Activated CD8-positive, alpha-beta T cell treated with anti-CD3 and anti-CD28 coated beads, Interleukin-2, amount 10 ng/mL, durations not matched to agents 7 days and 5 days (primary cell): ENCODE measurements at regions of chr3 and their contacts with region 1.

Region 1: DNA sequence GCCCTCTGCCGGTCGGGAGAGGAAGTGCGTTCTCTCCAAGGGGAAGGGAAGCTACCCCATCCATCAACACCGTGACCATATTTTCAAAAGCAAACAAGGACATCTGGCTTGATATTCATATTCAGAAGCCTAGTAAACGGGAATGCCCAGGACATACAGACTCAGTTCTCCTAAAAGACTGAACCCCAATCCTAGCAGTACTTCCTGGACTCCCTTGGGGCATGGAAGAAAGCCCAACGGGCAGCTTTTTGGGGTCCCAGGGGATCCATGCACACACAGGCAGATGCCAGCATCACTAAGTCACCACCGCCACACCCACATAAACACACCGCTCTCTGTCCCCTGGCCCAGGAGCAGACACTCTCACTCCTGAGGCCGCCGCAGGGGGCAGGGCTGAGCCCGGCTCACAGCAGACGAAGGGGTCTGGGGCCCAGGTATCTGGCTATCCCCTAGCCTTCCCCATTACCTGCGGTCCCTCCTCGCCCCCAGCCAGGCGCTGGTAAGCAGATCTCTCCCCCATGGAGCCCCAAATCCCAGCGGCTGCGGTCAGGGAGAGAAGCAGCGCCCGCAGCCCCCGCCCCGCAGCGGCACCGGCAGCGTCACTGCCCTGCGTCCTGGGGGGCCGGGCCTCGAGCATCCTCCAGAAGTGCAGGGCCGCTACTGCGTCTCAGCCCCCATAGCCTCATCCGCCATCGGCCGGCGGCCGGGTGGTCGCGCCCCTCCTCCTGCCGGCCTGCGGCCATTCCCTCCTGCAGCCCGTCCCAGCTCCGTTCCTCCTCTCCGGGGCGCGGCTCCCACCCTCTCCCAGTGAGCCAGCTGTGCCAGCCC is 13.4 kb downstream of the TNK2 start:
- DNase-seq: peak; percentile 78
- ATAC-seq: peak; percentile 75
- H3K4me3 Mint-ChIP-seq: peak overlapping the region; percentile 87
- H3K27ac Mint-ChIP-seq: peak overlapping the region; percentile 93
- H3K4me1 Mint-ChIP-seq: peaks cover 51% of the 10 kb centered on the region
- H3K27me3 Mint-ChIP-seq: no peaks in the 10 kb centered on the region

Region 2: GRCh38 chr3:195863121-195864006 is 31.6 kb before region 1 on chr3:
- CTCF ChIA-PET with region 1: interaction called, 54 read pairs
- POLR2A ChIA-PET with region 1: no interaction called
- DNase-seq: peak; percentile 70
- ATAC-seq: peak; percentile 72
- H3K4me3 Mint-ChIP-seq: no peak overlapping the region
- H3K27ac Mint-ChIP-seq: no peak overlapping the region
- H3K4me1 Mint-ChIP-seq: peaks cover 4% of the 10 kb centered on the region
- H3K27me3 Mint-ChIP-seq: no peaks in the 10 kb centered on the region

Region 3: GRCh38 chr3:195884691-195885035 is 10.3 kb before region 1 on chr3:
- CTCF ChIA-PET with region 1: interaction called, 12 read pairs
- POLR2A ChIA-PET with region 1: interaction called, 4 read pairs
- DNase-seq: no peak
- ATAC-seq: no peak
- H3K4me3 Mint-ChIP-seq: no peak overlapping the region
- H3K27ac Mint-ChIP-seq: no peak overlapping the region
- H3K4me1 Mint-ChIP-seq: peaks cover 8% of the 10 kb centered on the region
- H3K27me3 Mint-ChIP-seq: no peaks in the 10 kb centered on the region

Region 4: DNA sequence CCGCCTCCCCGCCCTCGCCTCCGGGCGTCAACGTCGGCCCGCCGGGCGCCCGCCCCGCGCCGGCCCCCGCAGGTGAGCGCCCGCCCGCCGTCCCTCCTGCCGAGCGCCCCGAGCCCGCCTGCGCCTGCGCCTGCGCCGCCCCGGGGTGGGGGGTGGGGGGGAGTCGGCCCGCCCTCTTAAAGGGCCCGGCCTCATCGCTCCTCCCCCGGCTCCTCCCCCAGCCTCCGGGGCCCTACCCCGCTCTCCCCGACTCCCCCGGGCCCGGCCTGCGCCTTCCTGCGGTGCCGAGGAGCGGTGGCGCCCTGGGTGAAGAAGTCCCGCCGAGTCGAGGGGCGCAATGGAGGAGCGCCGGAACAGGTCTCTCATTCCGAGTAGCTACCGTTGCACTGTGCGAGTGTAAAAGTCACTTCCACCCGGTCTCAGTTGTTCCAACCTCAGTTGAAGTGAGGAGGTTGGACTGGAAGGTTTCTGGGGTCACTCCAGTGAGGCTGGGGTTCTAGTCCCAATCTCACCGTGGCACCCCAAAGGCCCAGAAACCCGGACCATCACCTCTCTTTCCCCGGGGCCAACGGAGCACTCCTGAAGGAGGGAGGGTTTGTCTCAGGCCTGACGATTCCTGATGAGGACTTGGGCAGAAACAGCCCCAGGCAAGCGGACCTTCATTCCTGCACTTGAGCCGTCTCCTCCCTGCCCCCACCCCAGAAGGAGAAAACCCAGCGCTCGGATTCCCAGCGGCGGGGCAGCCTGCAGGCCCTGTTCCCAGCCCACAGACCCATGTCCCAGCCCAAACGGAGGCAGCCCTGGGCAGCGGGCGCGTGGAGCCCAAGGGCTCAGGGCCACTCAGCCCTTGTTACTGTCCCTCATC is 14.9 kb after region 1 on chr3:
- CTCF ChIA-PET with region 1: interaction called, 144 read pairs
- POLR2A ChIA-PET with region 1: interaction called, 160 read pairs
- DNase-seq: peak; percentile 90
- ATAC-seq: peak; percentile 64
- H3K4me3 Mint-ChIP-seq: peak overlapping the region; percentile 73
- H3K27ac Mint-ChIP-seq: peak overlapping the region; percentile 80
- H3K4me1 Mint-ChIP-seq: peaks cover 41% of the 10 kb centered on the region
- H3K27me3 Mint-ChIP-seq: no peaks in the 10 kb centered on the region

Region 5: GRCh38 chr3:195918176-195918575 is 23.2 kb after region 1 on chr3:
- CTCF ChIA-PET with region 1: interaction called, 144 read pairs
- POLR2A ChIA-PET with region 1: interaction called, 25 read pairs
- DNase-seq: no peak
- ATAC-seq: no peak
- H3K4me3 Mint-ChIP-seq: no peak overlapping the region
- H3K27ac Mint-ChIP-seq: no peak overlapping the region
- H3K4me1 Mint-ChIP-seq: peaks cover 11% of the 10 kb centered on the region
- H3K27me3 Mint-ChIP-seq: peaks cover 14% of the 10 kb centered on the region